Pancreas (tissue), 10 donors: ENCODE measurements at regions of chr3 and their contacts with region 1.

Region 1: GRCh38 chr3:181709537-181710279 is 2.0 kb upstream of the SOX2 start:
- DNase-seq: peak; percentile 40 to 94 (median 68)
- ATAC-seq: peak in 3 of 4 donors; percentile 75 to 84 (median 76)
- H3K4me3 ChIP-seq: no peak overlapping the region
- H3K27ac ChIP-seq: no peak overlapping the region
- H3K4me1 ChIP-seq: peaks cover 0 to 4% (median 0%) of the 10 kb centered on the region in 3 donors
- H3K27me3 ChIP-seq: peaks cover 18 to 95% (median 34%) of the 10 kb centered on the region in 4 donors
- CTCF ChIP-seq: peak; percentile 65 to 85 (median 78)

Region 2: GRCh38 chr3:181660337-181660736 is 49.4 kb before region 1 on chr3:
- intact Hi-C with region 1: no loop called
- DNase-seq: no peak
- ATAC-seq: no peak
- H3K4me3 ChIP-seq: no peak overlapping the region
- H3K27ac ChIP-seq: no peak overlapping the region
- H3K4me1 ChIP-seq: no peaks in the 10 kb centered on the region
- H3K27me3 ChIP-seq: peaks cover 0 to 4% (median 0%) of the 10 kb centered on the region in 4 donors
- CTCF ChIP-seq: no peak

Region 3: GRCh38 chr3:182261041-182261440 is 551.3 kb after region 1 on chr3:
- intact Hi-C with region 1: loop called in 1 of 3 experiments (anchors 5 kb)
- DNase-seq: no peak
- ATAC-seq: no peak
- H3K4me3 ChIP-seq: no peak overlapping the region
- H3K27ac ChIP-seq: no peak overlapping the region
- H3K4me1 ChIP-seq: no peaks in the 10 kb centered on the region
- H3K27me3 ChIP-seq: peaks cover 0 to 19% (median 3%) of the 10 kb centered on the region in 4 donors
- CTCF ChIP-seq: no peak

Region 4: GRCh38 chr3:182683453-182683852 is 973.7 kb after region 1 on chr3:
- intact Hi-C with region 1: loop called (anchors 5 to 10 kb)
- DNase-seq: peak in 4 of 6 donors; percentile 32 to 76 (median 47)
- ATAC-seq: peak; percentile 89 to 96 (median 96)
- H3K4me3 ChIP-seq: peak overlapping the region in 1 of 4 donors; percentile 60
- H3K27ac ChIP-seq: no peak overlapping the region
- H3K4me1 ChIP-seq: peaks cover 0 to 9% (median 4%) of the 10 kb centered on the region in 3 donors
- H3K27me3 ChIP-seq: peaks cover 0 to 25% (median 7%) of the 10 kb centered on the region in 4 donors
- CTCF ChIP-seq: peak; percentile 49 to 87 (median 72)